Activated CD4-positive, alpha-beta T cell treated with anti-CD3 and anti-CD28 coated beads, Interleukin-2, amount 10 ng/mL, durations not matched to agents 24 days and 14 days (primary cell): ENCODE measurements at regions of chr10 and their contacts with region 1.

Region 1: GRCh38 chr10:63173468-63174232 is 40.5 kb downstream of the NRBF2 start:
- DNase-seq: peak; percentile 72
- H3K4me3 Mint-ChIP-seq: peak overlapping the region; percentile 41
- H3K27ac Mint-ChIP-seq: peak overlapping the region; percentile 81
- H3K4me1 Mint-ChIP-seq: peaks cover 52% of the 10 kb centered on the region
- H3K27me3 Mint-ChIP-seq: no peaks in the 10 kb centered on the region

Region 2: GRCh38 chr10:62851442-62851841 is 322.2 kb before region 1 on chr10:
- intact Hi-C with region 1: loop called (anchors 5 kb)
- DNase-seq: peak; percentile 68
- H3K4me3 Mint-ChIP-seq: no peak overlapping the region
- H3K27ac Mint-ChIP-seq: peak overlapping the region; percentile 3
- H3K4me1 Mint-ChIP-seq: peaks cover 52% of the 10 kb centered on the region
- H3K27me3 Mint-ChIP-seq: no peaks in the 10 kb centered on the region

Region 3: GRCh38 chr10:63227207-63227915 is 53.7 kb after region 1 on chr10:
- intact Hi-C with region 1: loop called (anchors 5 kb)
- DNase-seq: peak; percentile 57
- H3K4me3 Mint-ChIP-seq: peak overlapping the region; percentile 71
- H3K27ac Mint-ChIP-seq: peak overlapping the region; percentile 81
- H3K4me1 Mint-ChIP-seq: peaks cover 31% of the 10 kb centered on the region
- H3K27me3 Mint-ChIP-seq: no peaks in the 10 kb centered on the region

Region 4: GRCh38 chr10:63465293-63466143 is 291.9 kb after region 1 on chr10 and contains the start of gene JMJD1C:
- intact Hi-C with region 1: loop called (anchors 5 kb)
- DNase-seq: peak; percentile 88
- H3K4me3 Mint-ChIP-seq: peak within 1 kb of the TSS; percentile 93
- H3K27ac Mint-ChIP-seq: peak within 1 kb of the TSS; percentile 67
- H3K4me1 Mint-ChIP-seq: peaks cover 17% of the 10 kb centered on the region
- H3K27me3 Mint-ChIP-seq: peaks cover 24% of the 10 kb centered on the region
- total RNA-seq, gene JMJD1C: 41.7 and 42.0 TPM in 2 replicates

Region 5: GRCh38 chr10:63707254-63707910 is 533.7 kb after region 1 on chr10:
- intact Hi-C with region 1: loop called (anchors 1 kb)
- DNase-seq: peak; percentile 63
- H3K4me3 Mint-ChIP-seq: peak overlapping the region; percentile 32
- H3K27ac Mint-ChIP-seq: peak overlapping the region; percentile 63
- H3K4me1 Mint-ChIP-seq: peaks cover 15% of the 10 kb centered on the region
- H3K27me3 Mint-ChIP-seq: no peaks in the 10 kb centered on the region